ENCODE measurements at regions of chr6 and their contacts with region 1.

Region 1: GRCh38 chr6:29649701-29650673 is 6.9 kb upstream of the MOG start:
- DNase-seq: peak; percentile 99
- ATAC-seq: peak; percentile 99
- H3K4me3 Mint-ChIP-seq: peak overlapping the region; percentile 89
- H3K27ac Mint-ChIP-seq: peak overlapping the region; percentile 98
- H3K4me1 Mint-ChIP-seq: peaks cover 14% of the 10 kb centered on the region
- H3K27me3 Mint-ChIP-seq: peaks cover 3% of the 10 kb centered on the region

Region 2: GRCh38 chr6:29624520-29624961 is 25.4 kb before region 1 on chr6:
- CTCF ChIA-PET with region 1: interaction called, 22 read pairs
- POLR2A ChIA-PET with region 1: no interaction called
- DNase-seq: no peak
- ATAC-seq: no peak
- H3K4me3 Mint-ChIP-seq: no peak overlapping the region
- H3K27ac Mint-ChIP-seq: no peak overlapping the region
- H3K4me1 Mint-ChIP-seq: peaks cover 11% of the 10 kb centered on the region
- H3K27me3 Mint-ChIP-seq: peaks cover 35% of the 10 kb centered on the region

Region 3: DNA sequence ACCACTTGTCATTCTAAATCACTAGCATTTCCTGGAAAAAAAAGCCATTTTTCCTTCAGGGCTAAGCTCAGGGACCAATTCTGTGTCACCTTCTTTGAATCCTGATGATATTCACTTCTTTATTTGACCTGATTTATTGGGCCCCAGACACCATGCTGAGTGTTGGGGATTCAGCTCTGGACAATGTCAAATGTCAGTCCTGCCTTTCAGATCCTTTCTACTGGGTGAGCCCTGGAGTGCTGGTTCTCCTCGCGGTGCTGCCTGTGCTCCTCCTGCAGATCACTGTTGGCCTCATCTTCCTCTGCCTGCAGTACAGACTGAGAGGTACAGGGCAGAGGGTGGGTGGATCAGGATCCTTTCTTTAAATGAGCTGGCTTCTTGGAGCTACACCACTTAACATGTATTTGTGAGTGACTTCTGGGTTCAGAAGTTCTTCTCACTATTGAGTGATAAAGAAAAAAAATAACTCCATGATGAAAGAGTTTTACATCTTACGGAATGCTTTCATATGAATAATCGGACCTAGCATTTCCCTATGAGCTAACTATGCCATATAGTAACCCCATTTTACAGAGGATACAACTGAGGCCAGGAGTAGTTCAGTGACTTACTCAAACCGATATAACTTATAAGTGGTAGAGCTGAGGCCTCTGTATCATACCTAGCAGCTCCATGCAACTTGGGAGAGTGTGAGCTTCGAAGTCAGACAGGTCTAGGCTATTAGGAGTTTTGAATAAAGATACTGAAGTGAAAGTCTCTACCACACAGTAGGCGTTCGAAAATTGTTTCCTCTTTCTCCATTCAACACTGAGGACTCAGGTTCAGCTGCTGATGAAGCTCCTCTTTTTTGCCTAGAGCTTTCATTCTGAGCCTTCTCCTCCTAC is 16.2 kb after region 1 on chr6:
- CTCF ChIA-PET with region 1: interaction called, 115 read pairs
- POLR2A ChIA-PET with region 1: no interaction called
- DNase-seq: no peak
- ATAC-seq: no peak
- H3K4me3 Mint-ChIP-seq: no peak overlapping the region
- H3K27ac Mint-ChIP-seq: no peak overlapping the region
- H3K4me1 Mint-ChIP-seq: no peaks in the 10 kb centered on the region
- H3K27me3 Mint-ChIP-seq: peaks cover 22% of the 10 kb centered on the region

Region 4: DNA sequence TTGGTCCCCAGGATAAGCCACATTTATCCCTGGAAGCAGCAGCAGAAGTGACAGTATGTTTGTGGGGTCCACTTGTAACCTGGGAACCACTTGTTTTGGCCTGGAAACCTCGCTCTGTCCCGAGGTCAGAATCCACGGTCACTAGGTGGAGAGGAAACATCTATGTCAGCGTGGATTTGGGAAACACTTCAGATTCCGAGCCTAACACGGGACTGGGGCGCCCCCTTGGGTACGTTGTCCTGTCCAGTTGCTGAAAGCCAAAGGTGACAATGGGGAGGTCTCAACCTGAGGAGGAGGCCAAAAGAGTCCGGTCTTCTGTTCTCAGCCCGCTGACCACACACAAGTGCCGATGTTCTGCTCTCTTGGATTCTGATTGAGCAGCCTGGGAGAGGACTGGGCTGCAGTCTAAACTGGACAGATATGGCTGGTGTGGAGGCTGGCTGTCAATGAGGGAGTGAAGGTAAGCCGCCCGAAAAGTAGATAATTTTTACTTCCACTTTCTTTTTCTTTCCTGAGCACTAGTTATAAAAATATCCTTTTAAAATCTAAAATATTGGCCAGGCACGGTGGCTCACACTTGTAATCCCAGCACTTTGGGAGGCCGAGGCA is 35.8 kb after region 1 on chr6:
- CTCF ChIA-PET with region 1: interaction called, 19 read pairs
- POLR2A ChIA-PET with region 1: no interaction called
- DNase-seq: no peak
- ATAC-seq: no peak
- H3K4me3 Mint-ChIP-seq: no peak overlapping the region
- H3K27ac Mint-ChIP-seq: no peak overlapping the region
- H3K4me1 Mint-ChIP-seq: peaks cover 6% of the 10 kb centered on the region
- H3K27me3 Mint-ChIP-seq: peaks cover 4% of the 10 kb centered on the region

Region 5: DNA sequence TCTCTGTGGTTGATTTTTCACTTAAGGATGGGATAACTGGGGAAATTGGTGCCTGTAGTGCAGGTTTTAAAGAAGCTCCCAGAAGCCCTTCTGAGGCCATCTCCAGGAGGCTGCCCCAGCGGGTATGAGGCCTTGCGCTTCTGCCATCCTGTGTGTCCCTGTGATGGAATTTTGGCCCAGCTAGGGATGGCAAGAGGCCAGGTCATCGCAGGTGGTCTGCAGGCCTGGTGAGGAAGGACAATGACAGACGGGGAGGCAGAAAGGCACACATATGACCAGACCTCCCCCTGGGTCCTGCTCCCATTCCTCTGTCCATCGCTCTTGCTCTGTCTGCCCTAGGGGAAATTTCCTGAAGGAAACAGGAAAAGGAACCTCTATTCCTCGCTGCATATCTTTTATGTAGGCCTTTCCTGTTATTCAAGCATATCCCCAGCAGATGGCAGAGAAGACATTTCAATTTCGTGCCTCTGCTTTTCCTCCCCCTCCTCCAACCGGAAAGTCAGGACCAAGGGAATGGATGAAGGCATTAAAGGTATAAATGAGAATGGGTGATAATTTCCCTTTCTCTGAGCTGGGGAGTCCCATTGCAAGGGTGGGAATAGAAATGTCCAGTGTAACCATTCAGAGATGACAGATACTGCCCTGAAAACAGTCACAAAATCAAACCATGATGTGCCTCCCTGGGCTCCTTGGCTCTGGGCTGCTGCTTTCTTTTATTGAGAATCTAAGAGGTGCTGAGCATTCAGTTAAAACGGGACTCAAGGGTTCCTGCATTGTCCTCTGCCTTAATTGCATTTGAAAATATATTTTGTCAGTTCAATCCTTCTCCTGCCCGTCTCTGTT is 55.6 kb after region 1 on chr6:
- CTCF ChIA-PET with region 1: interaction called, 22 read pairs
- POLR2A ChIA-PET with region 1: interaction called, 4 read pairs
- DNase-seq: peak; percentile 39
- ATAC-seq: no peak
- H3K4me3 Mint-ChIP-seq: no peak overlapping the region
- H3K27ac Mint-ChIP-seq: no peak overlapping the region
- H3K4me1 Mint-ChIP-seq: peaks cover 51% of the 10 kb centered on the region
- H3K27me3 Mint-ChIP-seq: peaks cover 13% of the 10 kb centered on the region

Region 6: DNA sequence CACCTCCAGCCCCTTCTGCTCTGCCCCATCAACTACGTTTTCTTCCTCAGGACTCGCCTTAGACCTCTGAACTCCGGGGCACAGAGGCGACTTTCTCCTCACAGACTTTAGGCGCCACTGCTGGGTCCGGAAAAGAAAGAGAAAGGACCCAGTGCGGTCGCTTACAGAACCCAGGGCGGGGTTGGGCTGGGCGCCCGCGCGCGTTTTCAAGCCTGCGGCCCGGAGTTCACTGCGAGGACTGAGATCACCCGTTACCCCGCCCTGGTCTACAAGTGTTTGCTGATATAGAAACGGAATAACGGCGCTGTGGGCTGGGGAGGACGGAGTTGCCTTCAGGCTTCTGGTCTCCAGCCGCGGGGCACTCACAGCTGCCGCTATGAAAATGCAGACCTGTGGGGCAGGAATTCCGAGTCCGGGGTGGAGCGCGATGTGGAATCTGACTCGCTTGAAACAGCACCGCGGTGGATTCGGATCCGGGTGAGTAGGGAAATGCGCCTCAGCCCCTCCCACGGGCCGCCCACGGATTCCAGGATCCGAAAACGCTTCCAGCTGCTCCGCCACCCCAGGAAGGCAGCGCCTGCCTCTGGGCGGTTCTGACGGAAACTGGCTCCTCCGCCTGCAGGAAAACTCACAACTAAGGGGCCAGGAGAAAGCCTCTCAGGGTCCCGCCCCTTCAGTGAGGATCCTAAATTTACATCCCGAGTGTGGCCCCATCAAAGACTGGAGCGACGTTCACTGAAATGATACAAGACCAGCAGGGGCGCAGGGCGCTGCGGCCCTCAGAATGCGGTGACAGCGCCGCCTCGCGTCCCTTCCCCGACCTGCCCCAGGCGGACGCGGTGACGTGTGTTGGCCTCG is 102.7 kb after region 1 on chr6:
- CTCF ChIA-PET with region 1: interaction called, 16 read pairs
- POLR2A ChIA-PET with region 1: no interaction called
- DNase-seq: peak; percentile 89
- ATAC-seq: peak; percentile 71
- H3K4me3 Mint-ChIP-seq: peak overlapping the region; percentile 95
- H3K27ac Mint-ChIP-seq: peak overlapping the region; percentile 96
- H3K4me1 Mint-ChIP-seq: peaks cover 53% of the 10 kb centered on the region
- H3K27me3 Mint-ChIP-seq: no peaks in the 10 kb centered on the region

Region 7: GRCh38 chr6:29834564-29835436 is 184.8 kb after region 1 on chr6:
- CTCF ChIA-PET with region 1: interaction called, 12 read pairs
- POLR2A ChIA-PET with region 1: no interaction called
- DNase-seq: peak; percentile 62
- ATAC-seq: peak; percentile 61
- H3K4me3 Mint-ChIP-seq: no peak overlapping the region
- H3K27ac Mint-ChIP-seq: no peak overlapping the region
- H3K4me1 Mint-ChIP-seq: peaks cover 8% of the 10 kb centered on the region
- H3K27me3 Mint-ChIP-seq: peaks cover 59% of the 10 kb centered on the region

Region 8: GRCh38 chr6:30091577-30092381 is 441.8 kb after region 1 on chr6:
- CTCF ChIA-PET with region 1: no interaction called
- POLR2A ChIA-PET with region 1: no interaction called
- DNase-seq: no peak
- ATAC-seq: no peak
- H3K4me3 Mint-ChIP-seq: no peak overlapping the region
- H3K27ac Mint-ChIP-seq: no peak overlapping the region
- H3K4me1 Mint-ChIP-seq: no peaks in the 10 kb centered on the region
- H3K27me3 Mint-ChIP-seq: peaks cover 69% of the 10 kb centered on the region